Activated CD4-positive, alpha-beta T cell treated with anti-CD3 and anti-CD28 coated beads for 36 hours (primary cell): ENCODE measurements at regions of chr22 and their contacts with region 1.

Region 1: DNA sequence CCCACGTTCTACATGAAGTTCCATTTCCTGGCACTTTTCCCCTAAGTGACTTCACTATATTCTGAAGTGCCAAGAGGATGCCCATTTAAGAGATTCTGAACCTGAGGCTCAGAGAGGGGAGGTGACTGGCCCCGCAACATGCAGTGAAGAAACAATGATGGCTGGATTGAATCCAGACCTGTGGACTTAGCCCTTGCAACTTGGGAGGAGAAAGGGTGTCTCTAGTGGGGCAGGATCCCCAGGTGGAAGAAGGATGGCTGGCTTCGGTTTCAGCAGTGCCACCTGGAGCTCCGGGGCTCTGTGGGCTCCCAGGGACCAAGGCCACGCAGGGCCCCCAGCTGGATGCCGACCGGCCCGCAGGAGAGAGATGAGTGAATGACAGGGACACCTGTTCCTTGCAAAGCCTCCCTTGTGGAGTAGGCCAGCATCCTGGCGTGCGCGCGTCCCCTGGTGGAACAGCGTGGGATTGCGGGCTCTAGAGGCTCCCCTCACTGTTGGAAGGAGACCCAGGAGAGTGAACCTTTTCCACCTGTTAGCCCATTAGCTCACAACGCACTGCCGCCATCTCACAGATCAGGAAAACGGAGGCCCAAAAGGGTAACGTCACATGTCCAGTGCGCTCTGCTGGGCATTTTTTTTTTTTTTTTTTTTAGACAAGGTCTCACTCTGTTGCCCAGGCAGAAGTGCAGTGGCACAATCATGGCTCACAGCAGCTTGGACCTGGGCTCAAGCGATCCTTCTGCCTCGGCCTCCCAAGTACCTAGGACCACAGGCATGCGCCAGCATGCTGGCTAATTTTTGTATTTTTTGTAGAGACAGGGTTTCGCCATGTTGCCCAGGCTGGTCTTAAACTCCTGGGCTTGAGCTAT is 104.7 kb downstream of the KIAA1671 start:
- DNase-seq: peak; percentile 90
- ATAC-seq: peak; percentile 49
- H3K4me3 Mint-ChIP-seq: no peak overlapping the region
- H3K27ac Mint-ChIP-seq: no peak overlapping the region
- H3K4me1 Mint-ChIP-seq: peaks cover 59% of the 10 kb centered on the region
- H3K27me3 Mint-ChIP-seq: peaks cover 2% of the 10 kb centered on the region

Region 2: GRCh38 chr22:24938741-24939341 is 118.4 kb before region 1 on chr22:
- CTCF ChIA-PET with region 1: interaction called, 9 read pairs
- POLR2A ChIA-PET with region 1: no interaction called
- intact Hi-C with region 1: loop called in 1 of 2 experiments (anchors 2 kb)
- DNase-seq: peak; percentile 38
- ATAC-seq: peak; percentile 55
- H3K4me3 Mint-ChIP-seq: no peak overlapping the region
- H3K27ac Mint-ChIP-seq: no peak overlapping the region
- H3K4me1 Mint-ChIP-seq: no peaks in the 10 kb centered on the region
- H3K27me3 Mint-ChIP-seq: peaks cover 4% of the 10 kb centered on the region

Region 3: DNA sequence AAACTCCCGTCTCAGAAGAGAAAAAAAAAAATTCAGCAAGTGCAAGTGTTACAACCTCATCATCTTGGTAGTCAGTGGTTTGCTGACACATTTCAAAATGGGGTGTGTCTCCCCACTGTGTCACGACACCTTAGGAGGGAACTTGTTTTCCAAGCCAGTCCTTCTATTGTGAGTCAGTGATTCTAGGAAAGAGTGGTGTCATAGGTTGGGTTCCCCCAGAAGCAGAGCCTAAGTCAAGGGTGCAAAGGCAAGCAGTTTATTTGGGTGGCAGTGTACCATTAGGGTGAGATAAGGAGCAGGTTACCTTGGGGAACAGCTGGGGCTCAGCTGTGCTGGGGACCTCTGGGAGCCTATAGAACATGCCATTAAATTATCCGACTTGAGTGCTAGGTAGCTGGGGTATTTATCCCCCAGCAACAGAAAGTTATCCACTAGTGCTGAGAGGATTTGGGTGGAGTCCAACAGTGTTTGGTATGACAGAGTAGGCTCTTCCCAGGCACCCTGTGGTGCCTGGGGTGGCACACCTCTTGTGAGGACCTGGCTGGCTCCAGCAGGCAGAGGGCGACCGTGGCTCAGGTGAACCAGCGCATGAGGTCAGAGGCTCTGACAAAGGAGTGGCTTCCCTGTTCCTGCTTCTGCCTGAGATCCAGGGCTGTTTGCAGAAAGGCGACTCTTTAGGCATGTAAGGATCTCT is 63.0 kb before region 1 on chr22:
- CTCF ChIA-PET with region 1: no interaction called
- POLR2A ChIA-PET with region 1: interaction called, 3 read pairs
- intact Hi-C with region 1: loop called (anchors 1 to 2 kb)
- DNase-seq: peak; percentile 73
- ATAC-seq: peak; percentile 98
- H3K4me3 Mint-ChIP-seq: no peak overlapping the region
- H3K27ac Mint-ChIP-seq: peak overlapping the region; percentile 49
- H3K4me1 Mint-ChIP-seq: peaks cover 17% of the 10 kb centered on the region
- H3K27me3 Mint-ChIP-seq: peaks cover 29% of the 10 kb centered on the region

Region 4: GRCh38 chr22:25067851-25068421 is 10.7 kb after region 1 on chr22:
- CTCF ChIA-PET with region 1: interaction called, 46 read pairs
- POLR2A ChIA-PET with region 1: no interaction called
- intact Hi-C with region 1: loop called (anchors 1 kb)
- DNase-seq: peak; percentile 90
- ATAC-seq: peak; percentile 74
- H3K4me3 Mint-ChIP-seq: peak overlapping the region; percentile 78
- H3K27ac Mint-ChIP-seq: peak overlapping the region; percentile 93
- H3K4me1 Mint-ChIP-seq: peaks cover 88% of the 10 kb centered on the region
- H3K27me3 Mint-ChIP-seq: no peaks in the 10 kb centered on the region

Region 5: GRCh38 chr22:25076336-25076735 is 19.1 kb after region 1 on chr22:
- CTCF ChIA-PET with region 1: interaction called, 46 read pairs
- POLR2A ChIA-PET with region 1: interaction called, 6 read pairs
- intact Hi-C with region 1: loop called (anchors 1 to 2 kb)
- DNase-seq: peak; percentile 85
- ATAC-seq: peak; percentile 76
- H3K4me3 Mint-ChIP-seq: peak overlapping the region; percentile 34
- H3K27ac Mint-ChIP-seq: peak overlapping the region; percentile 83
- H3K4me1 Mint-ChIP-seq: peaks cover 86% of the 10 kb centered on the region
- H3K27me3 Mint-ChIP-seq: no peaks in the 10 kb centered on the region

Region 6: GRCh38 chr22:25110846-25111578 is 53.8 kb after region 1 on chr22:
- CTCF ChIA-PET with region 1: interaction called, 6 read pairs
- POLR2A ChIA-PET with region 1: no interaction called
- intact Hi-C with region 1: loop called in 1 of 2 experiments (anchors 1 kb)
- DNase-seq: peak; percentile 69
- ATAC-seq: peak; percentile 82
- H3K4me3 Mint-ChIP-seq: peak overlapping the region; percentile 64
- H3K27ac Mint-ChIP-seq: peak overlapping the region; percentile 30
- H3K4me1 Mint-ChIP-seq: peaks cover 21% of the 10 kb centered on the region
- H3K27me3 Mint-ChIP-seq: no peaks in the 10 kb centered on the region

Region 7: DNA sequence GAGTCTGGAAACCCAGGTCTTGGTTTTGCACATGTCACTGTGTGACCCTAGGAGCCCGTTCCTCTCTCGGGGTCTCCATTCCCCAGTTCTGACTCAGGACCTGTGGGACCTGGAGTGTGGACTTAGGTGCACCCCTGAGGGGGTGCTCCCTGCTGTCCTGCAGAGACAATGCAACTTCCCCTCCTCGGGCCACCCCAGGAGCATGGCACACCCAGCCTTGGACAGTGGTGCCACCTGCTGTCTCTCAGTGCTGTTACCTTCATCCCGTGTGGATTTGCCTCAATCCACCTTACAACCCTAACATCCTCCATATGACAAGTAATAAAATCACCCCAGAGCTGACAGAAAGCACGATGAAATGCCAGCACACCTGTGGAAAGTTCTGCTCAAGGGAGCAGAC is 114.9 kb after region 1 on chr22:
- CTCF ChIA-PET with region 1: interaction called, 3 read pairs
- POLR2A ChIA-PET with region 1: no interaction called
- intact Hi-C with region 1: loop called (anchors 1 kb)
- DNase-seq: peak; percentile 71
- ATAC-seq: peak; percentile 83
- H3K4me3 Mint-ChIP-seq: no peak overlapping the region
- H3K27ac Mint-ChIP-seq: no peak overlapping the region
- H3K4me1 Mint-ChIP-seq: no peaks in the 10 kb centered on the region
- H3K27me3 Mint-ChIP-seq: no peaks in the 10 kb centered on the region